Right ventricle myocardium inferior (tissue), 1 donor: ENCODE measurements at regions of chr12 and their contacts with region 1.

Region 1: GRCh38 chr12:54368709-54369583 is 4.7 kb upstream of the GPR84 start:
- DNase-seq: peak; percentile 94
- ATAC-seq: peak; percentile 62

Region 2: DNA sequence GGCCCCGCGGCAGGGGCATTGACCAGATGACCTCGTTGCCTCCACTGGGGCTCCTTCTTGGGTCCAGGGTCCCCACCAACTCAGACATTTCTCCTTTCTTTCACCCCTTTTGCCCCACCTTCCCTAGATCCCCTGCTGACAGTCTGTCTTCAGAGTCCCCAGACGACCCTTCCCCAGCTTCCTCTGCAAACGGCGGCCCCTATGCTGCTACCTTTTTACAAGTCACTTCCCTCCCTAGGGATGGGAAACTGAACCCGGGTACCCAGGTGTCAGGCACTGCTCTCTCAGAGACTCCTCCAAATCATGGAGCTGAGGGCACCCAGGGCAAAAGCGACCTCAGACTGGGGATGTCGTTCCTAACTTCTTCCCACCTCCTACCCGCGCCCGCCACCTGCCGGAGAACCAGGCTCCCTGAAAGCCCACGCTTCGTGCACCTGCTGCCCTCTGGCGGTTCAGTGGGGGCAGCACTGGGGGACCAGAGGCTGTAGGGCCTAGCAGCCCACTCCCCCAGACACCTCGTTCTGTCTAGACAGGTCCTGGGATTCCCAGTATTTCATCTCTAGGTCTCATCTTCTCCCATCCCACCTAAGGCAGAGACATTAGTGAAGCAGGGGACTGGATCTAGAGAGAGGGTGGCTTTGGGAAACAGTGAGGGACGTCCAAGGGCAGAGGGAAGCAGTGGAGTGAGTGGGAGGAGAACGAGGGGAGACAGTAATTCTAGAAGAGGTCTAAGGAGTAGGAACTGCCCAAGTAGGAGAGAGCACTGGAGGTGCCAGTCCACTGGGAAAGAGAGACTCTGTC is 10.7 kb after region 1 on chr12:
- intact Hi-C with region 1: loop called (anchors 1 kb)
- DNase-seq: peak; percentile 95
- ATAC-seq: peak; percentile 83

Region 3: DNA sequence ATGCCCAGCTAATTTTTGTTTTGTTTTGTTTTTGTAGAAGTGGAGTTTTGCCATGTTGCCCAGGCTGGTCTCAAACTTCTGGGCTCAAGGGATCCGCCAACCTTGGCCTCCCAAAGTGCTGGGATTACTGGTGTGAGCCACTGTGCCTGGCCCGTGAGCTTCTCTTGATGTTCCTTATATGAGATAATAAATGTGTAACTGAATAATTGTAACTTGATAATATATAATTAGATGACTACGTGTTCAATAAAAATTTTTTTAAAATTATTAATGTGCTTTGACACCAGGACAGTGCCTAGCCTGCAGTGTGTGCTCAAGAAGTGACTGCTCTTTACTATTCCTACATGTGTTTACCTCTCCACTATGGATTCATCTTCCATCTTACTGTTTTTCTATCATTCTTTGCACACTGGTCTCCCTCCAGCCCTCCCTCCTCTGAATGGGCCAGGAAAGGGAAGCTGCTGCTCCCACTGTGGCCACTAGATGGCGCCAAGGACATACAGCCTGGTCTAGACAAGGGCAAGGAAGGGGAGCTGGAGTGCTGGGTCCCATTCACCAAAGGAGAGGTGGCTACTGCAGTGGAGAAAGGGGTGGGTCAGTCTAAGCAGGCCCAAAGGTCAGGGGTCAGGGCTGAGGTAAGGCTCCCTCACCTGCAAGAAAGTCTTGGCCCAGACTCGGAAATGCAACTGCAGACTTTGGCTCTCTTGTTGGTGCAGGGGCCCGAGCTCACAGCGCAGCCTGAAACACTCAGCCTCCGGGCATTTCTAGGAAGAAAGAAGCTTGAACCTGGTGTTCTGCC is 30.2 kb after region 1 on chr12:
- intact Hi-C with region 1: no loop called
- DNase-seq: peak; percentile 90
- ATAC-seq: peak; percentile 83